Heart left ventricle (tissue), 16 donors: ENCODE measurements at regions of chr2 and their contacts with region 1.

Region 1: DNA sequence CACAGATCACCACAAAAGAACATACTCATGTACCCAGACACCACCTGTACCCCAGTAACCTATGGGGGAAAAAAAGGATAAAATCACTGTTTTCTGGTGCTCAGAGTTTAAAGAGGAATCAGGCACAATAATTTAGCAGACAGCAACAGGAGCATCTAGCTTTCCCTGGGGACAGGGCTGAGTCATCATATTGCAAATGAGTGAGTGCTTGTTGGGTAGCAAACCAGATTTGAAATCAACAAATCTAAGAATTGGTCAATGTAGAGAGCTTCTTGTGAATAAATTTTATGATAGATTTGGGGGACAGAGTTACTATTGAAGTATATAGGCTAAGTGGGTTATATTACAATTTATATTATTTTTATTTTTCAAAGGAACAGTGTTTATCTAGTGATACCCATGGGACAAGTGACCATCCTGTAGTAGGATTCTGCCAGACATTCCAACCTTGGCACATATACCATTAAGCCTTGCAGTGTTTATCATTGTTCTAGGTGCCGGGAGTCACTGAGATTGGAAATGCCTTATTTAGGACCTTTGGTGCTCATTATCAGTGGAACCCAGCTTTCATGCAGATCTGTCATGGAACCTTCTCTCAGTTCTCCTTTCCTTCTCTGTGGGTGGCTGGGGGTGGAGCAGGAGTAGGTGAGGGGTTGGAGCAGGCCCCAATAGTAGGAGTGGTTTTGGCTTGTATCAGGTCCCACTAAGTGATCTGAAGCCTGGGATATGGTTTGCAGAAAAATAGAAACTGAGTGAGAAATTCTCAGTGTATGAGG is 117.2 kb downstream of the CERS6 start:
- DNase-seq: no peak
- ATAC-seq: no peak
- H3K4me3 ChIP-seq: no peak overlapping the region
- H3K27ac ChIP-seq: no peak overlapping the region
- H3K4me1 ChIP-seq: peaks cover 0 to 54% (median 21%) of the 10 kb centered on the region in 12 donors
- H3K27me3 ChIP-seq: no peaks in the 10 kb centered on the region
- CTCF ChIP-seq: no peak
- POLR2A ChIP-seq: no peak

Region 2: GRCh38 chr2:168278424-168278888 is 294.9 kb before region 1 on chr2:
- intact Hi-C with region 1: no loop called
- DNase-seq: no peak
- ATAC-seq: no peak
- H3K4me3 ChIP-seq: no peak overlapping the region
- H3K27ac ChIP-seq: no peak overlapping the region
- H3K4me1 ChIP-seq: peaks cover 0 to 6% (median 0%) of the 10 kb centered on the region in 12 donors
- H3K27me3 ChIP-seq: no peaks in the 10 kb centered on the region
- CTCF ChIP-seq: no peak
- POLR2A ChIP-seq: no peak

Region 3: DNA sequence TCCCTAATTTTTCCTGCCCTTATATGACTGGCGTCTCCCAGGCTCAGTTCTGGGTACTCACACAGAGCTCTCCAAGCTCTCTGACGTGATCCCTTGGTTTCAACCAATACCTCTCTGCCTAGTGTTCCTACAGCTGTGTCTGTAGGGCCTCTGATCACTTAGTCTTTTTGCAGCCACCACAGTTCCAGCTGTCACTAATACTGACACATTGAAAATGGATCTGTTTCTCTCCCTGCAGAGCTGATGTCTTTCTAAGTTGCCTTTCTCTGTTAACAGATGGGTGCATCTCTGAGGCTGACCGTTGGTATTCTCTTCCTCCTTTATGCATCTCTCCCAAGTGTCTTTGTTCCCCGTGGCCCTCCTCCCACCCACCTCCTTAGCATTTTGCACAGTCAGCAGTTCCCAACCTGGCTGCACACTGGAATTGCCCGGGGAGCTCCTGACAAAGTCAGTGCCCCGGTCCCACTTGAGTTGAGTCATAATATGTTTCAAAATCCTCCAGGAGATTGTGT is 54.7 kb before region 1 on chr2:
- intact Hi-C with region 1: no loop called
- DNase-seq: peak in 3 of 5 donors; percentile 29 to 51 (median 39)
- ATAC-seq: peak; percentile 80 to 94 (median 90)
- H3K4me3 ChIP-seq: peak overlapping the region in 1 of 12 donors; percentile 9
- H3K27ac ChIP-seq: peak overlapping the region in 11 of 12 donors; percentile 21 to 78 (median 52)
- H3K4me1 ChIP-seq: peaks cover 0 to 66% (median 37%) of the 10 kb centered on the region in 12 donors
- H3K27me3 ChIP-seq: no peaks in the 10 kb centered on the region
- CTCF ChIP-seq: no peak
- POLR2A ChIP-seq: no peak

Region 4: GRCh38 chr2:168530982-168531622 is 42.2 kb before region 1 on chr2:
- intact Hi-C with region 1: loop called in 1 of 10 experiments (anchors 5 kb)
- DNase-seq: no peak
- ATAC-seq: peak in 1 of 4 donors; percentile 32
- H3K4me3 ChIP-seq: no peak overlapping the region
- H3K27ac ChIP-seq: peak overlapping the region in 11 of 12 donors; percentile 56 to 84 (median 77)
- H3K4me1 ChIP-seq: peaks cover 7 to 84% (median 37%) of the 10 kb centered on the region in 12 donors
- H3K27me3 ChIP-seq: no peaks in the 10 kb centered on the region
- CTCF ChIP-seq: no peak
- POLR2A ChIP-seq: no peak

Region 5: DNA sequence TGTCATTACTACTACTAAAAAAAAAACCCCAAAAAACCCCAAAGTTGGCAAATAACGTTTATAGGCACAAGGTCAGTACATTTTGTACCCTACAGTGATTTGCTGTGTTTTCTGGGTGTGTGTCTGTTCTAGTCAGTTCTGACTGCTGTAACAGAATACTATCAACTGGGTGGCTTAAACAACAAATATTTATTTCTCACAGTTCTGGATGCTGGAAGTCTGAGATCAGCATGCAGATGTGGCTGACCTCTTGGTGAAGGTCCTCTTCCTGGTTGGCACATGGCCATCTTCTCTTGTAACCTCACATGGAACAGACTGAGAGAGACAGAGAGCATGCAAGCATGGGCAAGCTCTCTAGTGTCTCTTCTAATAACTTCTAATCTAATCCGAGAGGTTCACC is 14.1 kb before region 1 on chr2:
- intact Hi-C with region 1: no loop called
- DNase-seq: peak in 2 of 5 donors; percentile 35 to 46
- ATAC-seq: peak; percentile 41 to 62 (median 55)
- H3K4me3 ChIP-seq: no peak overlapping the region
- H3K27ac ChIP-seq: peak overlapping the region in 2 of 12 donors; percentile 16 to 17
- H3K4me1 ChIP-seq: peaks cover 0 to 23% (median 13%) of the 10 kb centered on the region in 12 donors
- H3K27me3 ChIP-seq: no peaks in the 10 kb centered on the region
- CTCF ChIP-seq: no peak
- POLR2A ChIP-seq: no peak

Region 6: GRCh38 chr2:168626096-168626495 is 52.8 kb after region 1 on chr2:
- intact Hi-C with region 1: loop called in 1 of 10 experiments (anchors 10 kb)
- DNase-seq: no peak
- ATAC-seq: no peak
- H3K4me3 ChIP-seq: no peak overlapping the region
- H3K27ac ChIP-seq: peak overlapping the region in 2 of 12 donors; percentile 14 to 33
- H3K4me1 ChIP-seq: peaks cover 0 to 8% (median 0%) of the 10 kb centered on the region in 12 donors
- H3K27me3 ChIP-seq: no peaks in the 10 kb centered on the region
- CTCF ChIP-seq: no peak
- POLR2A ChIP-seq: no peak

Region 7: DNA sequence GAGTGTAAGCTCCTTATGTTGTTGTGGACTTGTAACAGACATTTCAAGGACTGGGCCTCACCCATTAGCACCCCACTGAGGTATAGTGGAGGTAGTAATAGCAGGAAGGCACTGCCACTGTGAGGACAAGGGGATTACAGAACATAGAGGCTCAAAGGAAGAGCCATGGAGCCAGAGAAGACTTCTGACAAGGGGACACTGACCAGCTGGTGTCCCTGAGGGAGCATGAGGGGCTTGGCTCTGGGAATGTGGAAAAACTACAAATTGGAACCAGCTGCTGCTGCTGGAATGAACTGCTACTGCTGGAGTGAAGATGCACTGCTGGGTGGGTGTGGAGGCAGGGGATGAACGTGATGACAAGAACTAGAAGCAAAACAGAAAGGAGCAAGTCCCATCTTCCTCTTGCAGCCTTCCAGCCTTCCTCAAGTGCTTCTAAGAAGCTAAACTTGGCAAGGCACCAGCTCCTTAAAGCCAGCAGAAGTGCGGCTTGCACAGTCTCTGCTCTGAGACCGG is 61.8 kb after region 1 on chr2:
- intact Hi-C with region 1: loop called in 2 of 10 experiments (anchors 5 kb)
- DNase-seq: peak; percentile 60 to 84 (median 72)
- ATAC-seq: peak; percentile 22 to 65 (median 38)
- H3K4me3 ChIP-seq: no peak overlapping the region
- H3K27ac ChIP-seq: peak overlapping the region in 9 of 12 donors; percentile 16 to 92 (median 82)
- H3K4me1 ChIP-seq: peaks cover 0 to 71% (median 45%) of the 10 kb centered on the region in 12 donors
- H3K27me3 ChIP-seq: no peaks in the 10 kb centered on the region
- CTCF ChIP-seq: no peak
- POLR2A ChIP-seq: no peak